Aorta (tissue), 5 donors: ENCODE measurements at regions of chr4 and their contacts with region 1.

Region 1: GRCh38 chr4:123767806-123768205 is 371.2 kb downstream of the SPRY1 start:
- DNase-seq: no peak
- ATAC-seq: no peak
- H3K4me3 ChIP-seq: no peak overlapping the region
- H3K27ac ChIP-seq: no peak overlapping the region
- H3K4me1 ChIP-seq: no peaks in the 10 kb centered on the region
- H3K27me3 ChIP-seq: no peaks in the 10 kb centered on the region

Region 2: DNA sequence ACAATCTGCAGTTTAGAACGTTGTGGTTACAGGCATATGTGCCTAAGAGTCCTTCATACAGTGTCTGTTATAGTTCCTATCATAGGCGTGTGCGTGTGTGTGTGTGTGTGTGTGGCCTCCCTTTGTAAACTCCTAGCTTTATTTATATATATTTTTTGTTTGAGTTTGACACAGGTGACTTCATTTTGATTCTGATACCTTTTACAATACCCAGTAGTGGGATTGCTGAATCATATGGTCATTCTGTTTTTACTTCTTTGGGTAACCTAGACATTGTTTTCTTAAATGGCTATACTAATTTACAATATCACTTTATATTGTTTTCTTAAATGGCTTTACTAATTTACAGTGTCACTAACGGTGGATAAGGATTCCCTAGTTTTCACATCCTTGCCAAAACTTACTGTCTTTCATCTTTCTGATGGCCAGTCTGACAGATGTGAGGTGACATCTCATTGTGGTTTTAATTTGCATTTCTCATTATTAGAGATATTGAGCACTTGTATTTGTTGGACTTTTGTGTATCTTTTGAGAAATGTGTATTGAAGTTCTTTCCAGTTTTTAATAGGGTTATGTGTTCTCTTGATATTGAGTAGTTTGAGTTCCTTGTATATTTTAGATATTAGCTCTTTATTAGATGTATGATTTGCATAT is 634.3 kb before region 1 on chr4:
- intact Hi-C with region 1: loop called in 1 of 2 experiments (anchors 5 kb)
- DNase-seq: no peak
- ATAC-seq: no peak
- H3K4me3 ChIP-seq: no peak overlapping the region
- H3K27ac ChIP-seq: no peak overlapping the region
- H3K4me1 ChIP-seq: no peaks in the 10 kb centered on the region
- H3K27me3 ChIP-seq: no peaks in the 10 kb centered on the region

Region 3: DNA sequence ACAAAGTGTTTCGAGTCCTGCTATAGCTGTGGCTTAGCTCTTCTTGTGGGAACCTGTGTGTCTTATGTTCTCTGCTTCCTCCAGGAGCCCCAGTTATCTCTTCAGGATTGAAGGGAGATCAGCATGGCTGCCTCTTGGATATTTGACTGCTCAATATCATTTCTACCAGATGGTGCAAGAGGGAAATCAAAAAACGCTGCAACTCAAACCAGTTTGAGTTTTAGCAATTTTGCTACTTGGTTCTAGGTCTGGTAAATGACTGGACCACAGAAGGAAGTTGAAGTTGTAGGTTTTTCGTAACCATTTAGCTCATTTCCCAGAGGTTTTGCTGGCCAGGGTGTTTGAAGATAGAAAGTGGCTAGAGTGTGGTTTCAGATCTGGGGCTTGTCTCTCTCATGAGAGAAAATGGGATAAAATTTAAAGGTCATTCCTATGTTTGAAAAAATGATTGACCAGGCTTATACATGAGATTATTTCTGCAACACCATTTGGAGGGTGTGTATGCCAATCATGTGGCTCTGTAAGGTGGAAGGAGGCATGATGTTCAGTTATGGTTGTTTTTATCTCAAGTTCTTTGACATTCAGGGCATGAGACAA is 160.8 kb before region 1 on chr4:
- intact Hi-C with region 1: no loop called
- DNase-seq: no peak
- ATAC-seq: no peak
- H3K4me3 ChIP-seq: no peak overlapping the region
- H3K27ac ChIP-seq: no peak overlapping the region
- H3K4me1 ChIP-seq: no peaks in the 10 kb centered on the region
- H3K27me3 ChIP-seq: no peaks in the 10 kb centered on the region

Region 4: GRCh38 chr4:124111922-124112321 is 344.1 kb after region 1 on chr4:
- intact Hi-C with region 1: loop called (anchors 5 to 10 kb)
- DNase-seq: no peak
- ATAC-seq: peak; percentile 81
- H3K4me3 ChIP-seq: no peak overlapping the region
- H3K27ac ChIP-seq: no peak overlapping the region
- H3K4me1 ChIP-seq: no peaks in the 10 kb centered on the region
- H3K27me3 ChIP-seq: no peaks in the 10 kb centered on the region

Region 5: GRCh38 chr4:124322234-124323065 is 554.6 kb after region 1 on chr4:
- intact Hi-C with region 1: loop called in 1 of 2 experiments (anchors 10 kb)
- DNase-seq: no peak
- ATAC-seq: peak; percentile 64
- H3K4me3 ChIP-seq: no peak overlapping the region
- H3K27ac ChIP-seq: no peak overlapping the region
- H3K4me1 ChIP-seq: no peaks in the 10 kb centered on the region
- H3K27me3 ChIP-seq: no peaks in the 10 kb centered on the region